Psoas muscle (tissue), 8 donors: ENCODE measurements at regions of chr3 and their contacts with region 1.

Region 1: GRCh38 chr3:101625879-101626278 is 51.1 kb downstream of the ZBTB11 start:
- DNase-seq: no peak
- ATAC-seq: no peak
- H3K4me3 ChIP-seq: no peak overlapping the region
- H3K27ac ChIP-seq: no peak overlapping the region
- H3K4me1 ChIP-seq: no peaks in the 10 kb centered on the region
- H3K27me3 ChIP-seq: no peaks in the 10 kb centered on the region
- CTCF ChIP-seq: no peak

Region 2: DNA sequence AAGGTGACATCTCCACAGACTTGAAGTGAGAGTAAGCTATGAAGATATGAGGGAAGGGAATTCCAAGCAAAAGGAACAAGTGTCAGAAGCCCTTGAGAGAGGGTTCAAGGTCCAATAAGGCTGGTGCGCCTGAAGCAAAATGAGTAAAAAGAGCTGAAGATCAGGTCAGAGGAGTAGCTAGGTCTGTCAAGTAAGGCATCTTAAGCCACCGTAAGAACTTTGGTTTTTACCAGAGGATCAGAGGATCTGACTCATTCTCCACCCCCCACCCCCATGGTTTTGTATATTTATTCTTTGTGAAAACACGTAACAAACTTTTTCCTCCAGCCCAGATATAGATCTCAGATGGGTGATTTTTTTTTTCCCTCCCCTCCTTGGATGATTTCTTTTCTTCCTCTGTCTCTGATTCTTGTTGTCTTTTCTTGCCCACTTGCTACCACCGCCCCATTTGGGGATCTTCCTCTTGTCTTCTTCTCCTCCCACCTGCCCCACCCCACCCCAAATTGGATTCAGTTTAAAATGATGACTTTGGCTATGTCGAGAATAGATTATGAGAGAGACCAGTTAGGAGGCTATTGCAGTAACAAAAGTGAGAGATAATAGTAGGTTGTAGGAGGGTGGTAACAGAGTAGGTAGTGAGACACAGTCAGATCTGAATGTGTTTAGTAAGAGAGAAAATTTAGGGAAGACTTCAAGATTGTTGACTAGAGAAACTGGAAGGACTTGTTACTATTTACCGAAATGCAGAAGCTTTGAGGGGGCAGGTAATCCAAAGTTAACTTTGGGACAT is 58.2 kb before region 1 on chr3:
- intact Hi-C with region 1: no loop called
- DNase-seq: no peak
- ATAC-seq: no peak
- H3K4me3 ChIP-seq: no peak overlapping the region
- H3K27ac ChIP-seq: no peak overlapping the region
- H3K4me1 ChIP-seq: peaks cover 11% of the 10 kb centered on the region
- H3K27me3 ChIP-seq: no peaks in the 10 kb centered on the region
- CTCF ChIP-seq: no peak

Region 3: DNA sequence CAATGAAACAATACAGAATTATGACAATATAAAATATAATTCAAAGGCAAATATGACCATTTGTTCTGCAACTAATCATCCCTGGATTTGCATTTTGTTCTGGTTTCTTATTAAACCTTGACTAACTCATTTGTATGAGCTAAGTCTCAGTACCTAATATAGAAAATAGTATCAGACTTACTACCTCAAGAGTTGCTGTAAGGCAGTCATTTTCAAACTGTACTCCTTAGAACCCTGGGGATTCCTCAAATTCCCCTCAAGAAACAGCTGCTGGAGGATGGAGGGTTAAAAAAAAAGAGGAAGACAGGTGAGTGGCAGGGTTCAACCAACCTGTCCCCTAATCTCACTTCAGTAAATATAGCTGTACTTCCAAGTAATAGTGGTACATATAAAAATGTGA is 40.0 kb after region 1 on chr3:
- intact Hi-C with region 1: loop called in 1 of 2 experiments (anchors 2 kb)
- DNase-seq: no peak
- ATAC-seq: no peak
- H3K4me3 ChIP-seq: no peak overlapping the region
- H3K27ac ChIP-seq: no peak overlapping the region
- H3K4me1 ChIP-seq: no peaks in the 10 kb centered on the region
- H3K27me3 ChIP-seq: no peaks in the 10 kb centered on the region
- CTCF ChIP-seq: no peak